Activated T-helper 1 cell treated with anti-CD3 and anti-CD28 coated beads, Interleukin-12 subunit alpha, Interleukin-12 subunit beta, Interleukin-2, Interleukin-4 antibody, amounts not matched to agents 30 ng/mL and 10 ng/mL and 1 ng/mL, durations not matched to agents 14 hours and 24 hours and 36 hours (primary cell): ENCODE measurements at regions of chr7 and their contacts with region 1.

Region 1: DNA sequence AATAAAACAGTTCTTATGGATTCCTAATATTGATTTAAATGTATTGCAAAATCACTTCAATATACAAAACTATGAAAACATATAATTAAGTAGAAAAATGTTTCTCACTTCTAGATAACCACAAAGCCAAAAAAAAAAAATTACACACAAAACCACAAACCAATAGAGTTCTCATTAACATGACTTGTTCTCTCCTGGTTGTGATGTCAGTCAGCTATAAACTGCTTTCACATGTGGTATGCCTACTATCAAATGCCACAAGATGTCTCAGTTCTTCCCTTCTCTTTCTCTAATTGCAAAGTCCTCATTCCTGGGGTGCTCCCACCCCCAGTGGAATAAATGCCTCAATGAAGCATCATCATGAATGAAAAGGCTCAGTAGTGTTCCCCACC is 16.6 kb downstream of the GNAI1 start:
- DNase-seq: no peak
- H3K4me3 Mint-ChIP-seq: peak overlapping the region; percentile 38
- H3K27ac Mint-ChIP-seq: peak overlapping the region; percentile 47
- H3K4me1 Mint-ChIP-seq: peaks cover 17% of the 10 kb centered on the region
- H3K27me3 Mint-ChIP-seq: peaks cover 8% of the 10 kb centered on the region

Region 2: DNA sequence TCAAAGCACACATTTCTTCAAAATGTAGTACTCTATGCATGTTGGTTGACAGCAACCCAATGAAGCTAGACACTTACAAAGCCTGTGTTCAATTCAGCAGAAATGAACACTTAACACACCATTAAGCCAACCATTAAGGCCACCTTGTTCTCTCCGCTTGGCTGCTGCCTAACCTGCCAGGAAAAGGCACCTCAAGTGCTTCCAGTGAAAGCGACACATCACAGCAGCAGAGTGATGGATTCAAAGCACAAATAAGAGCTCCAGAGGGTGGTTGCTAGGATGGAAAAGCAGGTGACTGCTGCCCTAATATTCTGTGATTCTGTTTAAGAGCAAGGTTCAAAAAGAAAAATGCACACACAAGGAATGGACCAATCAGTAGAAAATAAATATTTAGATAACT is 98.1 kb before region 1 on chr7:
- intact Hi-C with region 1: no loop called
- DNase-seq: no peak
- H3K4me3 Mint-ChIP-seq: no peak overlapping the region
- H3K27ac Mint-ChIP-seq: no peak overlapping the region
- H3K4me1 Mint-ChIP-seq: no peaks in the 10 kb centered on the region
- H3K27me3 Mint-ChIP-seq: peaks cover 3% of the 10 kb centered on the region

Region 3: GRCh38 chr7:80078159-80078731 is 73.0 kb before region 1 on chr7:
- intact Hi-C with region 1: loop called (anchors 2 kb)
- DNase-seq: no peak
- H3K4me3 Mint-ChIP-seq: peak overlapping the region; percentile 74
- H3K27ac Mint-ChIP-seq: peak overlapping the region; percentile 52
- H3K4me1 Mint-ChIP-seq: peaks cover 12% of the 10 kb centered on the region
- H3K27me3 Mint-ChIP-seq: no peaks in the 10 kb centered on the region

Region 4: DNA sequence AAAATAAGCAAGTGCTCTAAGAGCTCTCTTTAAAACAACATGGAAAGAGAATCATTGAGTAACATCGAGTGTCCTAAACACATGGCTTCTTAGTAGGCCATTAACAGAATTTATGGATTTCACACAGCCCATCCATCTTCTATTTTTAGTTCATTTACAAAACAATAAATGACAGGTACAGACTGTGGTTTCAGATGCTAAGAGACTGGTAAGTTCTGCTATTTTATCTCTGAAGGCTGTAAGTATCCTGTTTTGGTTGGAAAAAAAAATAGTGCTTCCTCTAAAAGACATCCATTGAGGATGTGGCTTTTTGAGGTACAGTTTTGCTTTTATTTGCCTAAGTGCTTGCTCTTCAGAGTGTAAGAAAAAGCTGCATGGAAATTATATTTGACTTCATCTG is 44.0 kb before region 1 on chr7:
- intact Hi-C with region 1: loop called (anchors 5 kb)
- DNase-seq: no peak
- H3K4me3 Mint-ChIP-seq: no peak overlapping the region
- H3K27ac Mint-ChIP-seq: peak overlapping the region; percentile 67
- H3K4me1 Mint-ChIP-seq: peaks cover 26% of the 10 kb centered on the region
- H3K27me3 Mint-ChIP-seq: no peaks in the 10 kb centered on the region

Region 5: GRCh38 chr7:80175744-80176143 is 24.5 kb after region 1 on chr7:
- intact Hi-C with region 1: loop called (anchors 1 kb)
- DNase-seq: no peak
- H3K4me3 Mint-ChIP-seq: no peak overlapping the region
- H3K27ac Mint-ChIP-seq: no peak overlapping the region
- H3K4me1 Mint-ChIP-seq: peaks cover 16% of the 10 kb centered on the region
- H3K27me3 Mint-ChIP-seq: no peaks in the 10 kb centered on the region

Region 6: DNA sequence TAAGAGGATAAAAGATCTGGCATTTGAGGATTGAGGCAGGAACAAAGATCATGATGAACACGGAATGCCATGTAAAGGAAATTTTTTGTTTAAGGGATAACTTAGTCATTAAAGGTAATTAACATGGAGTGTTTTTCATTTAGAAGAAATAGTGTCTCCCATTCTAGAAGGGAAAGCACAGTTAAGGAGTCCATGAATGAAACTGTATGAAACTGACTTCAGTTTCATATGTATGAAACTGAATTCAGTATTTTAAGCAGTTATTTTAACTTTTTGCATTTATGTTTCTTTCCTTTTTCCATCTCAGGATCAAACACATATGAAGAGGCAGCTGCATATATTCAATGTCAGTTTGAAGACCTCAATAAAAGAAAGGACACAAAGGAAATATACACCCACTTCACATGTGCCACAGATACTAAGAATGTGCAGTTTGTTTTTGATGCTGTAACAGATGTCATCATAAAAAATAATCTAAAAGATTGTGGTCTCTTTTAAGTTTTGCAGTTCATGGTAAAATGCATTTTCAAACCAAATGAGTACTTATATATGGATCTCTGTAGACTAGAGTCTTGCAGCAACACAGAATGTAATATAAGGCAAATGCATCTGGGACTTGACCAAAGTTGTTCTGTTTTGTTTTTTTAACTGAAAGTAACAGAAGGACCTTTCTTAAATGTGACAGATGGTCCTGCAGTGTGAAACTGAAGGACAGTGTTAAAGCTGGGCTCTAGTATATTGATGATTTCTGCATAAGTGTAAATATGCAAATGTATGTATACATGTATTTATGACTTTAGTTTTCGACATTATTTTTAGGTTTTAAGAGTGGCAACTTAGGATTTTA is 65.9 kb after region 1 on chr7:
- intact Hi-C with region 1: loop called (anchors 1 kb)
- DNase-seq: no peak
- H3K4me3 Mint-ChIP-seq: no peak overlapping the region
- H3K27ac Mint-ChIP-seq: no peak overlapping the region
- H3K4me1 Mint-ChIP-seq: no peaks in the 10 kb centered on the region
- H3K27me3 Mint-ChIP-seq: no peaks in the 10 kb centered on the region